IMR-90 (cell line): ENCODE measurements at regions of chr2 and their contacts with region 1.

Region 1: DNA sequence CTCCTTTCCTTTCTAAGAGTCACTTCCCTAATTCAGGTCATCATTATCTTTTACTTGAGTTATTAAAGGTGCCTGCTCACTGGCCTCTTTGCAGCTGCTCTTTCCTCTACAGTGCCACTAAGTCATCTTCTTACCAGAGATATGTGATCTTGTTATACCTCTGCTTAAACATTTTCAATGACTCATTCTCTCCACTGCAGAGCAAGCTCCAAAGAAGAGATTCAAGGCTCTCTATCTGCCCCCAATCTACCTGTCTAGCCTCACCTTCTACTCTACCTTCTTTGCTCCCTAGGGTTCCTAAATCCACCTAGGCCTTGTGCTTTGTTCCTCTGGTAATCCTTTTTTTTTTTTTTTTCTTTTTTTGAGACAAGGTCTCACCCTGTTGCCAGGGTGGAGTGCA is 3.1 kb downstream of the ARHGEF33 start:
- DNase-seq: peak; percentile 34
- ATAC-seq: peak; percentile 57
- H3K4me3 ChIP-seq: no peak overlapping the region
- H3K27ac ChIP-seq: no peak overlapping the region
- H3K4me1 ChIP-seq: no peaks in the 10 kb centered on the region
- H3K27me3 ChIP-seq: no peaks in the 10 kb centered on the region
- CTCF ChIP-seq: no peak
- POLR2A ChIP-seq: no peak
- RAD21 ChIP-seq: no peak

Region 2: DNA sequence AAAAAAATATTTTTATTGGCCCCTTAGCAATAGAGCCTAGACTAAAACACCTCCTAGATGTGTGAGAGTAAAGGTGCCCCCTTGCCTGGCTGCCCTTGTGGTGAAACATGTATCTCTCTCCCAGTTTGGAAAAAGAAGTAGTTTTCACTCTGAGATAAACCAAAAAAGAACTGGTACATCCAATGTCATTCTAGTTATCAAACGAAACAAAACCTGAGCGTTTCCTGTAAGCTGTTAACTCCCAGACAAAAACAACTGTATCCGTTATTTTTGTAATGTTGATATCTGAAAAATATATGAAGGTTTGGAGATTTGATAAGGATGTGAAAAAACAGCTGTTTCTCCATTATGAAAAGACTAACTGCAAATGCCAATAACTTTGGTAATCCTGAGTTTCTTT is 1833.0 kb before region 1 on chr2:
- CTCF ChIA-PET with region 1: no interaction called
- POLR2A ChIA-PET with region 1: no interaction called
- dilution Hi-C with region 1: no loop called
- in situ Hi-C with region 1: no loop called
- intact Hi-C with region 1: no loop called
- DNase-seq: no peak
- ATAC-seq: no peak
- H3K4me3 ChIP-seq: no peak overlapping the region
- H3K27ac ChIP-seq: no peak overlapping the region
- H3K4me1 ChIP-seq: peaks cover 2% of the 10 kb centered on the region; the same call in 1 of the 2 replicates
- H3K27me3 ChIP-seq: no peaks in the 10 kb centered on the region
- CTCF ChIP-seq: no peak
- POLR2A ChIP-seq: no peak
- RAD21 ChIP-seq: no peak

Region 3: DNA sequence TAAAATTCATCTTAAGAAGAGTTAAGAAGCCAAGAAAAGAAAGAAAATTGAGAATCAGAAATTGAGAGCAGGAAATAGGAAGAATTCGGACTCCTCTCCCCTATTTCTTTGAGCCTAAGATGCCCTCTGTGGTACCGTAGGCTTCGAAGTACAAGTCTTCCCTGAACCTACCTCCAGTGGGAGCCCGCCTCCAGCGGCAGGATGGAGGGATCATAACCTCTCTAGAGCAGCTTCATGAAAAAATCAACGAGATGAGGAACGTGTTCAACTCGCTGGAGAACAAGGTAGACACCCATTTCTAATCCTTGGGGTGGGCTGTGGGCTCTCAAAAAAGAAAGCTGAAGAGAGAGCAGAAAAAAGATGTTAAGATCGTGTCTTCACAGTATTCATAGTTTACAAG is 33.2 kb after region 1 on chr2:
- CTCF ChIA-PET with region 1: no interaction called
- POLR2A ChIA-PET with region 1: no interaction called
- dilution Hi-C with region 1: no loop called
- in situ Hi-C with region 1: no loop called
- intact Hi-C with region 1: loop called (anchors 5 kb)
- DNase-seq: no peak
- ATAC-seq: no peak
- H3K4me3 ChIP-seq: no peak overlapping the region
- H3K27ac ChIP-seq: no peak overlapping the region
- H3K4me1 ChIP-seq: no peaks in the 10 kb centered on the region
- H3K27me3 ChIP-seq: peaks cover 3% of the 10 kb centered on the region
- CTCF ChIP-seq: no peak
- POLR2A ChIP-seq: no peak
- RAD21 ChIP-seq: no peak

Region 4: GRCh38 chr2:40230707-40231432 is 1338.1 kb after region 1 on chr2:
- CTCF ChIA-PET with region 1: no interaction called
- POLR2A ChIA-PET with region 1: no interaction called
- dilution Hi-C with region 1: no loop called
- in situ Hi-C with region 1: no loop called
- intact Hi-C with region 1: no loop called
- DNase-seq: no peak
- ATAC-seq: peak; percentile 61
- H3K4me3 ChIP-seq: no peak overlapping the region
- H3K27ac ChIP-seq: no peak overlapping the region
- H3K4me1 ChIP-seq: peaks cover 3% of the 10 kb centered on the region; the same call in 1 of the 2 replicates
- H3K27me3 ChIP-seq: no peaks in the 10 kb centered on the region
- CTCF ChIP-seq: no peak
- POLR2A ChIP-seq: no peak
- RAD21 ChIP-seq: no peak